GM10248 (cell line): ENCODE measurements at regions of chr15 and their contacts with region 1.

Region 1: GRCh38 chr15:47196057-47196456 is 521.2 kb upstream of the SEMA6D start:
- DNase-seq: peak; percentile 37
- CTCF ChIP-seq: peak; percentile 92

Region 2: DNA sequence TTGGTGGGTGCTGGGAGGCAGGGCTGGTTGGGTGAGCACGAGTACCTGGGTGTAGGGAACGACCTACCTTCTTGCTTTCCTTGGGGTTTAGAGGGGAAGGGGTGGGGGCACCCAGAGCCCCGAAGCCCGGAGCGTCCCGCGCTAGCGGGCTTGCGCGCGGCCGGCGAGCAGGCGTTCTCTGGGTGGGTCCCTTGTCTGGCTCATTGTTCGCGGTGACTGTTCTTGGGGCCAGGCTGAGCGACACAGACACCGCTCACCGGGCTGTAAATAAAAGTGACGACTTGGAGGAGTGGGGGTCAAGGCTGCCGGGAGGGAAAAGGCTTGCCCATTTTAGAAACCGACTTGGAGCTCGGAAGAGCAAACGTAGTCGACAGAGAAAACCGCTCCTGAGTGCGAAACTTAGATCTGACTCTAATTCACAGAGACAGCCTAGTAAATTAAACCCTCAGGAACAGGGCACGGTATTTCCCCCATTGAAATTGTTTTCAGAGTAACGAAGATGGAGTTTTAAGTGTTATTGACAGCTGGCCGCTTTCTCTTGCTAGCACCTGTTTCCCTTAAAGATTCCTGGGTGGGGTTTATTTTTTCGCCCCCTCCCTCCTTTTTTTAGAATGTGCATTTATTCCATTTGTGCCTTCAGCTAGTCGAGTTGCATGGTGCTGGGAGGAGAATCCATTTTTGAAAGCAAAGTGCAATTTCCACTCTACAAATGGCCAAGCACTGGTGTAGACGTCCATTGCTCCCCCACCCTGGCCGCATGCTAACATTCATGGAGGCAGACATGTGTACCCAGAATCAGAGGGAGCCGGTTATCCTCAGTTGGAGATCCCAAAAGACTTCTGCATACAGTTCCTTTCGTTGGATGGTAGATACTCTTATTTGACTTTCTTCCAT is 10.9 kb before region 1 on chr15:
- CTCF ChIA-PET with region 1: interaction called, 21 read pairs
- POLR2A ChIA-PET with region 1: no interaction called
- DNase-seq: peak; percentile 8
- CTCF ChIP-seq: no peak

Region 3: DNA sequence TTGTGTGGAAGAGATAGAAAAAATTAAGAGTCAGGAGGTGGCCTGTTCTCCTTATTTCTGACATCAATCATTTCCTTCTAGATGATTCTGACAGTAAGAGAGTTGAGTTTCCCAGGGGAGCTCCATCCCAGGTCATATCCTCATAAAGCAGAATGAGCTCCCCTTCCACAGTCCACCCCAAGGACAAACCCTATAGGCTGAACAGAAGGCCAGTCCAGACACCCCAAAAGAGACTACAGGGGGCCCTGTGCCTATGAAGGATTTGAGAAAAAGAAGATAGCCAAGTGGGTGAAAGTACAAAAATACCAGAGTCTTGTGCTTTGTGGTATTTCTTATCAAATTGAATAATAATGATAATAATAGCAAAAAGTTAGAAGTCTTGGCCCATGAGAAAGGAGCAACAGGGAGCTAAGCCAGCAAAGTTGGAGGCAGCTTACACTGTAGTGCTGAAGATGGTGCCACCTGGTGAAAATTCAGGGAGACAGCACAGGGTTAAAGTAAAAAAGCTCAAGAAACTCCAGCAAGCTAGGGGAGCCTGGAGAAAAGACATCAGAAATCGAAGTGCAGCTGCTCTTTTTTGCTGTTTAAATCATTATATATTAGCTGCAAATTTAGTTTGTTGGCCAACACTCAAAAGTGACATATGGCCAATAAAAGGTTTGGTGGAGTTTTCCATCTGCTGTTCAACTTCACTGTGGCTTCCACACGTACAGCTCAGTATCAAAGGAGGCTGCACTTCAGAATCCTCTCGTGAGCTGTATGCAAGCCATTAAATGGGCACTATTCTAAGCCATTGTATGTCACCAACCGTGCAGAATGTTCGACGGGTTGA is 888.9 kb after region 1 on chr15:
- CTCF ChIA-PET with region 1: interaction called, 31 read pairs
- POLR2A ChIA-PET with region 1: no interaction called
- DNase-seq: peak; percentile 24
- CTCF ChIP-seq: peak; percentile 52

Region 4: GRCh38 chr15:48250640-48251076 is 1054.6 kb after region 1 on chr15:
- CTCF ChIA-PET with region 1: interaction called, 11 read pairs
- POLR2A ChIA-PET with region 1: no interaction called
- DNase-seq: peak; percentile 52
- CTCF ChIP-seq: peak; percentile 58

Region 5: DNA sequence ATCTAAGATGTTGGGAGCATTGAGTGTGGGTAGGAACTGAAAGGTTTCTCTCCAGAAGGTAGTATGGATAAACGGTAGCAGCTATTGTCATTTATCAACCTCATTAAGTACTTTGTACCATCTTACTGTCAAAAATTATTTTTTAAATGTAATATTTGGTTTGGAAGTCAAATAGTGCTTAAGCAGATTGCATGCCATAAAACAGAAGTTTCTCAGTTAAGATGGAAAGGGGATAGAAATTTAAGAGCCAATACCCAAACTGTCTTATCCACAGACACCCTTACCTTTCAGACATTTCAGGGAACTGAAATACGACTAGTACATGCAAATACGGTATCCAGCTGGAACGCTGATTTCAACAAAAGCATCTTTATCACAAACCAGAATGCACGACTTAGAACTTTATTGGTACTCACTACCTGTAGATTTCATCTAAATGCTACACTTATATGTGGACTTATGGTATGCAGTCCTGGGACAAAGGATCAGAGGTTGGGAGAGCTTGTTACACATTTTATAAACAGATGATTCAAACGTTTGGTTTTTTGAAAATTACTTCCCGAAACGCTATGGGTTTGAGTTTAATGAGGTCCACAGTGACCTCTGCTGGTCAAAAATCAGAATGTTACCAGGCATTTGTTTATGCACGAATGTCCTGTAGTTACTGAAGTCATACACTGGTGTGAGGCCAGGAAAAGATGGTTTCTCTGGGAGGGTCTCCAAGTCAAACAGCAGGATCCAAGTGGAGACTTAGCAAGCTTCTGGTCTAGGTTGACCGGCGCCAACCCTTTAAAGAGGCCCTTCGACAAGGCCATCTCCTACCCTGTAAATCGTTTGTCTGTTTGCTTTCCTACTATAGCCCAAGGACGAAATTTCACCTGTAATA is 1089.5 kb after region 1 on chr15:
- CTCF ChIA-PET with region 1: interaction called, 53 read pairs
- POLR2A ChIA-PET with region 1: no interaction called
- DNase-seq: peak; percentile 53
- CTCF ChIP-seq: peak; percentile 54